ENCODE measurements at regions of chr6 and their contacts with region 1.

Region 1: GRCh38 chr6:83192871-83193746 is at the starts of genes PGM3 and RWDD2A:
- DNase-seq: peak; percentile 85
- H3K4me3 Mint-ChIP-seq: peak within 1 kb of the TSS; percentile 98
- H3K27ac Mint-ChIP-seq: peak within 1 kb of the TSS; percentile 94
- H3K4me1 Mint-ChIP-seq: peaks cover 38% of the 10 kb centered on the region
- H3K27me3 Mint-ChIP-seq: peaks cover 2% of the 10 kb centered on the region
- total RNA-seq, gene PGM3: 24.8 and 25.4 TPM in 2 replicates
- total RNA-seq, gene RWDD2A: 0.98 and 1.3 TPM in 2 replicates

Region 2: GRCh38 chr6:83215131-83216047 is 22.3 kb after region 1 on chr6:
- intact Hi-C with region 1: loop called (anchors 1 kb)
- DNase-seq: peak; percentile 40
- H3K4me3 Mint-ChIP-seq: no peak overlapping the region
- H3K27ac Mint-ChIP-seq: no peak overlapping the region
- H3K4me1 Mint-ChIP-seq: no peaks in the 10 kb centered on the region
- H3K27me3 Mint-ChIP-seq: peaks cover 19% of the 10 kb centered on the region

Region 3: GRCh38 chr6:83313882-83314281 is 120.8 kb after region 1 on chr6:
- intact Hi-C with region 1: no loop called
- DNase-seq: no peak
- H3K4me3 Mint-ChIP-seq: no peak overlapping the region
- H3K27ac Mint-ChIP-seq: no peak overlapping the region
- H3K4me1 Mint-ChIP-seq: no peaks in the 10 kb centered on the region
- H3K27me3 Mint-ChIP-seq: peaks cover 4% of the 10 kb centered on the region

Region 4: GRCh38 chr6:83859410-83860358 is 666.6 kb after region 1 on chr6 and contains the start of gene CYB5R4:
- intact Hi-C with region 1: loop called (anchors 10 kb)
- DNase-seq: peak; percentile 91
- H3K4me3 Mint-ChIP-seq: peak within 1 kb of the TSS; percentile 99
- H3K27ac Mint-ChIP-seq: peak within 1 kb of the TSS; percentile 90
- H3K4me1 Mint-ChIP-seq: peaks cover 33% of the 10 kb centered on the region
- H3K27me3 Mint-ChIP-seq: peaks cover 11% of the 10 kb centered on the region
- total RNA-seq, gene CYB5R4: 24.5 and 25.3 TPM in 2 replicates

Measured in activated T-helper 1 cell treated with anti-CD3 and anti-CD28 coated beads, Interleukin-12 subunit alpha, Interleukin-12 subunit beta, Interleukin-2, Interleukin-4 antibody, amounts not matched to agents 30 ng/mL and 10 ng/mL and 1 ng/mL, durations not matched to agents 14 hours and 24 hours and 36 hours (primary cell).